Endothelial cell of umbilical vein (primary cell): ENCODE measurements at regions of chr9 and their contacts with region 1.

Region 1: DNA sequence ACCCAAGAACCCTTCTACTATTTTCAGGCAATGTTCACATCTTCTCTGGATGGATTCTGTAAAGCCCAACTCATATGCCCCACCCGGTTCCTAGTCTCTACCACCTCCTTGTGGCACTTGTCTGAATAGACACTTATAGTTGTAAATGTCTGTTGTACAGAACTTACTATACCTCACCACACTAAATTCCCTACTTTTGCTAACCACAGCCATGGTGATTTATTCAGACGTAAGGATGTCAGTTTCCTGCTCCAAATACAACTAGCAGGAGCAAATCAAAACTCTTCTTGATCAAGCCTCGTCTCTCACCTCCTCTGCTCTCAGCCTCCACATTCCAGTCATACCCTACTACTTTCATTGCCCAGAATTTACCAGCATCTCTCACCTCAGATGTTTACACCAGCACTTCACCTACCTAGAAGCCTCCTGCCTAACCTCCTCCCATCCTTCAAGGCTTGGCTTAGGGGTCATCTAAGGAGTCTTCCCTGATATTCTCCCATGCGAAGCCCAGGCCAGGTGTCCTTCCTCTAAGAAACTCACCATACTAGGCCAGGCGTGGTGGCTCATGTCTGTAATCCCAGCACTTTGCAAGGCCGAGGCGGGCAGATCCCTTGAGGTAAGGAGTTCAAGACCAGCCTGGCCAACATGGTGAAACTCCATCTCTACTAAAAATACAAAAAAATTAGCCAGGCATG is 75.5 kb downstream of the MAPKAP1 start:
- DNase-seq: peak; percentile 73
- H3K4me3 ChIP-seq: no peak overlapping the region
- H3K27ac ChIP-seq: peak overlapping the region; percentile 32
- H3K4me1 ChIP-seq: peaks cover 29% of the 10 kb centered on the region
- H3K27me3 ChIP-seq: no peaks in the 10 kb centered on the region
- CTCF ChIP-seq: peak; percentile 62 to 65
- POLR2A ChIP-seq: no peak

Region 2: GRCh38 chr9:125428060-125428901 is 203.3 kb before region 1 on chr9:
- CTCF ChIA-PET with region 1: no interaction called
- POLR2A ChIA-PET with region 1: no interaction called
- dilution Hi-C with region 1: no loop called
- intact Hi-C with region 1: loop called (anchors 5 kb)
- DNase-seq: no peak
- H3K4me3 ChIP-seq: no peak overlapping the region
- H3K27ac ChIP-seq: no peak overlapping the region
- H3K4me1 ChIP-seq: no peaks in the 10 kb centered on the region
- H3K27me3 ChIP-seq: no peaks in the 10 kb centered on the region
- CTCF ChIP-seq: peak; percentile 24 to 55
- POLR2A ChIP-seq: no peak

Region 3: GRCh38 chr9:125472926-125473701 is 158.4 kb before region 1 on chr9:
- CTCF ChIA-PET with region 1: no interaction called
- POLR2A ChIA-PET with region 1: no interaction called
- dilution Hi-C with region 1: no loop called
- intact Hi-C with region 1: loop called (anchors 5 kb)
- DNase-seq: peak; percentile 70
- H3K4me3 ChIP-seq: no peak overlapping the region
- H3K27ac ChIP-seq: no peak overlapping the region
- H3K4me1 ChIP-seq: peaks cover 20% of the 10 kb centered on the region
- H3K27me3 ChIP-seq: no peaks in the 10 kb centered on the region
- CTCF ChIP-seq: peak in 1 of 2 donors; percentile 20
- POLR2A ChIP-seq: no peak

Region 4: DNA sequence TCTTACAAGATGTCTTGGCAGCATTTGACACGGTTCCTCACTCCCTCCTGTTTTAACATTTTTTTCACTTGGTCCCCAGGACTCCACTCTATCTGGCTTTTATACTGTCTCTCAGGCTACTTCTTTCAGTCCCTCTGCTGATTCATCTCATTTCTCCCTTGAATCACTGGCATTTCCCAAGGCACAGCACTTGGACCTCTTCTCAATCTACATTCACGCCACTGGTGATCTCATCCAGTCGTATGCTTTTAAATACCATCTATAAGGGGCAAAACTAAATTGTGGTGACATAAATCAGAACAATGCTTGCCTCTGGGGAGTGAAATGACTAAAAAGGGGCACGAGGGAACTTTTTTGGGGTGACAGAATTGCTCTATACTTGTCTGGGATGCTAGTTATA is 28.4 kb after region 1 on chr9:
- CTCF ChIA-PET with region 1: no interaction called
- POLR2A ChIA-PET with region 1: no interaction called
- dilution Hi-C with region 1: no loop called
- intact Hi-C with region 1: no loop called
- DNase-seq: peak; percentile 62
- H3K4me3 ChIP-seq: no peak overlapping the region
- H3K27ac ChIP-seq: peak overlapping the region; percentile 68
- H3K4me1 ChIP-seq: peaks cover 35% of the 10 kb centered on the region
- H3K27me3 ChIP-seq: no peaks in the 10 kb centered on the region
- CTCF ChIP-seq: no peak
- POLR2A ChIP-seq: no peak

Region 5: DNA sequence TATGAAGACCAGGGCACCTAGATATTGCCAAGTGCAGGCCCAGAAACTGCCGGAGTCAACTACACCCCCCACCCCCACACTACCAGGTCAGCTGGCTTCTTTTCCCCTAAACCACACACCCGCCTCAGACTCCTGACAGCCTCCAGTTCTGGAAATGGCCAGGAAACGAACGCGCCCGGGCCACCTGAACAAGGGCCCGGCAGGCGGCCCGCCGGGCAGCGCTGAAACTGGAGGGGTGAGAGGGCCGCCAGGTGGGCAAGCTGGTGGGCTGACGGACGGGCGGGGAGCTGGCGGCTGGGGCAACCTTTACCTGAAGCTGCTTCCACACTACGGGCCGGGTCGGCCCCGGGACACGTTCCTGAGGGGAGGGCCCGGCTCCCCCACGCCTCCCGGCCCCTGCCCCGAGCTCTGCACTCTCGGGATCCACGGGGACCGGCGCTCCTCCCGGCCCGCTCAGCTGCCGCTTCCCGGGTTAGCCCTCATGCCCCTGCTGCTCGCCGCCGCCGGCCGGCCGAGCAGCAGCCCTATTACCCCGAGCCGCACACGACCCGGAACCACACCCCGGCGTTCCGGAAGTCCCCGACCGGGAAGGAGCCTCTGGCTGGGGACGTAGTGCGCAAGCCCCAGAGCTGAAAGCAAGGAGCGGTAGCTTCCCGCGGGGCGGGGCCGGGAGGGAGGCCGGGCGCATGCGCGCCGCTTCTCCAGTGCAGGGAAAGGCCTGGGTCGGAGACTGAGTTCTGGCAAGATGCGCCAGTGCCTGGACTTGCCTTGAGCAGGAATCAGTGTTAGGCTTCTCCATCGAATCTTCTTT is 75.3 kb after region 1 on chr9 and contains the start of gene MAPKAP1:
- CTCF ChIA-PET with region 1: no interaction called
- POLR2A ChIA-PET with region 1: interaction called, 3 read pairs
- dilution Hi-C with region 1: no loop called
- intact Hi-C with region 1: loop called (anchors 5 kb)
- DNase-seq: peak; percentile 95
- H3K4me3 ChIP-seq: peak within 1 kb of the TSS; percentile 75 to 85 (median 84)
- H3K27ac ChIP-seq: peak within 1 kb of the TSS; percentile 82
- H3K4me1 ChIP-seq: peaks cover 13% of the 10 kb centered on the region
- H3K27me3 ChIP-seq: no peaks in the 10 kb centered on the region
- CTCF ChIP-seq: no peak
- POLR2A ChIP-seq: peak; percentile 82
- total RNA-seq, gene MAPKAP1: 98.6 and 99.1 TPM in 2 replicates